ENCODE measurements at regions of chr12 and their contacts with region 1.

Region 1: GRCh38 chr12:24212496-24212895 is 263.0 kb upstream of the SOX5 start:
- DNase-seq: no peak
- H3K4me3 ChIP-seq: no peak overlapping the region
- H3K27ac ChIP-seq: no peak overlapping the region
- H3K27me3 ChIP-seq: no peaks in the 10 kb centered on the region
- CTCF ChIP-seq: no peak

Region 2: GRCh38 chr12:22874151-22874550 is 1338.3 kb before region 1 on chr12:
- intact Hi-C with region 1: loop called in 1 of 2 experiments (anchors 10 kb)
- DNase-seq: no peak
- H3K4me3 ChIP-seq: no peak overlapping the region
- H3K27ac ChIP-seq: no peak overlapping the region
- H3K27me3 ChIP-seq: no peaks in the 10 kb centered on the region
- CTCF ChIP-seq: no peak

Region 3: GRCh38 chr12:24307716-24308335 is 95.3 kb after region 1 on chr12:
- intact Hi-C with region 1: no loop called
- DNase-seq: no peak
- H3K4me3 ChIP-seq: no peak overlapping the region
- H3K27ac ChIP-seq: no peak overlapping the region
- H3K27me3 ChIP-seq: no peaks in the 10 kb centered on the region
- CTCF ChIP-seq: no peak

Region 4: GRCh38 chr12:24360907-24361306 is 148.4 kb after region 1 on chr12:
- intact Hi-C with region 1: no loop called
- DNase-seq: no peak
- H3K4me3 ChIP-seq: no peak overlapping the region
- H3K27ac ChIP-seq: no peak overlapping the region
- H3K27me3 ChIP-seq: no peaks in the 10 kb centered on the region
- CTCF ChIP-seq: no peak

Measured in dorsolateral prefrontal cortex (tissue), 120 donors.